GM13976 (cell line): ENCODE measurements at regions of chr4 and their contacts with region 1.

Region 1: GRCh38 chr4:41990365-41991111 is at the start of gene SLC30A9:
- DNase-seq: peak; percentile 97
- CTCF ChIP-seq: peak; percentile 1

Region 2: DNA sequence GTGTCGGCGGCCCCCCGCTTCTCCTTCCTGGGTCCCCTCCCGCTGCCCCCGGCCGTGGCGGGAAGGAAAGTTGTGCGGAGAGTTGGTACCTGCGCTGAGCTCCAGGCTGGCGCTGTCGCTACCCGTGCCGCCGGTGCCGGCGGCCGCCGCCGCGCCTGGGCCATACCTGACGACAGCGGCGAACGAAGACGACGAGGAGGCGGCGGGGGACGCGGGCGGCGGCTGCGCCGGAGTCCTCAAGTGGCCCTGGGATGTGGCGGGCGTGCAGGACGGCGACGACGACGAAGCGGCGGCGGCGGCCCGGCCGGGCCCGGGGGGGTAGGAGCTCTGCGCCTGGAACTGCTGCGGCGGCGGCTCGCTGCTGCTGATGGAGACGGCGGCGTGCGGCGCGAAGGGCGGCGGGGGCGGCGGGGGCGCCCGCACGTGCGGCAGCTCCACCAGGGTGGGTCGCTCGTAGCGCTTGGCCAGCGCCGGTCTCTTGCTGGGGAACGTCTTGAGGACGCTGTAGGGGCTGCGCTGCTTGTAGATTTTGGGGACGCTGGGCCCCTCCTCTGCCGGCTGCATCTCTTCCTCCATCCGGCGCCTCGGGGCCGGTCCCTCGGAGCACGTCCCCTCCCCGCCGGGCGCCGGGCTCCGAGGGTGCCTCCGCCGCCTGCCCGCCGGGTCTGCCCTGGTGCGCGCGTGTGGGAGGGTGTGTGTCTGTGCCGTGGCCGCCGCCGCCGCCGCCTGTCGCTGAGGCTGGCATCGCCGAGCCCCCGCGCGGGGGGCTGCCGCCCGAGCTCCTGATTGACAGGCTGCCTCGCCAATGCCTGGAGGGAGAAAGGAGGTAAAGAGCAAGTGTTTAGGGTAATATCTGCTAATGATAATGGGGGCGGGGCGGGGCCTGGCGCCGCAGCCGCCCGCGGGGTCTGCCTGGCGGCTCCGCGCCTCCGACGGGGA is 161.3 kb after region 1 on chr4:
- in situ Hi-C with region 1: no loop called
- DNase-seq: peak; percentile 89
- CTCF ChIP-seq: no peak

Region 3: GRCh38 chr4:42519803-42520417 is 529.4 kb after region 1 on chr4:
- in situ Hi-C with region 1: loop called (anchors 25 kb)
- DNase-seq: peak; percentile 20
- CTCF ChIP-seq: peak; percentile 39

Region 4: DNA sequence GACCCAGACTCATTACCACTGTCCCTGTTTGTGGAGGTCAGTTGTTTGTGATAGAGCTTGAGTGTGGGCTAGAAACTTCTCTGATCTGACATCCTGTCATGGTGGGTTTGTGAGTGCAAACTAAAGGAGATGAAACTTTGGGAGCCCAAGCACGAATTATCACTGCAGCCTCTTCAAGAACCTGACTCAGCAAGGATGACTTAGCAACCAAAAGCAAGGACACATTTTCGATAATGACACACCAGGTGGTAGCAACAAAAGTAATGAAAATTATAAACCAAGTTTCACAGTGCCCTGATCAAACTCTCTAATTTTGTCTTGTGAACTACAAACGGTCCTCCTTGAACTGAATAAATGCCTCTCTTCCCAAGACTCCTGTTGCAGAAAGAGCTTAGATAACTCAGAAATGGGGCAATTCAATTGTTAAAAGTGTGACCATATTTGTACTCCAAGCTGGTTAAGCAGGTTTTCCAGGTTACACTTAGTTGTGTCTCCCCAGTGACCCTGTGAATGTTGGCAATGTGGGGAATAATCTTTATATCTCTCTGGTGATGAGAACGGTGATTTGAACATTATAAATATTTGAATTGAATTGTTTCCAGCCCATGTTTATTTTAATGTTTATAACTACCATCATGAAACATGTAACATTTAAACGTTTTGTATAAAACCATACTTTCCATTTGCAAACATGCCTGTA is 719.0 kb after region 1 on chr4:
- in situ Hi-C with region 1: no loop called
- DNase-seq: no peak
- CTCF ChIP-seq: no peak